Activated CD4-positive, alpha-beta T cell treated with anti-CD3 and anti-CD28 coated beads for 36 hours (primary cell): ENCODE measurements at regions of chr9 and their contacts with region 1.

Region 1: GRCh38 chr9:113591001-113591898 is 127.7 kb downstream of the RGS3 start:
- DNase-seq: peak; percentile 89
- ATAC-seq: peak; percentile 74
- H3K4me3 Mint-ChIP-seq: no peak overlapping the region
- H3K27ac Mint-ChIP-seq: no peak overlapping the region
- H3K4me1 Mint-ChIP-seq: peaks cover 40% of the 10 kb centered on the region
- H3K27me3 Mint-ChIP-seq: no peaks in the 10 kb centered on the region

Region 2: GRCh38 chr9:113446323-113446740 is 144.9 kb before region 1 on chr9:
- CTCF ChIA-PET with region 1: interaction called, 33 read pairs
- POLR2A ChIA-PET with region 1: no interaction called
- intact Hi-C with region 1: loop called (anchors 2 kb)
- DNase-seq: peak; percentile 28
- ATAC-seq: peak; percentile 47
- H3K4me3 Mint-ChIP-seq: no peak overlapping the region
- H3K27ac Mint-ChIP-seq: no peak overlapping the region
- H3K4me1 Mint-ChIP-seq: peaks cover 3% of the 10 kb centered on the region
- H3K27me3 Mint-ChIP-seq: no peaks in the 10 kb centered on the region

Region 3: GRCh38 chr9:113602126-113603044 is 11.1 kb after region 1 on chr9:
- CTCF ChIA-PET with region 1: interaction called, 19 read pairs
- POLR2A ChIA-PET with region 1: no interaction called
- intact Hi-C with region 1: no loop called
- DNase-seq: peak; percentile 92
- ATAC-seq: peak; percentile 100
- H3K4me3 Mint-ChIP-seq: no peak overlapping the region
- H3K27ac Mint-ChIP-seq: peak overlapping the region; percentile 78
- H3K4me1 Mint-ChIP-seq: peaks cover 15% of the 10 kb centered on the region
- H3K27me3 Mint-ChIP-seq: no peaks in the 10 kb centered on the region

Region 4: DNA sequence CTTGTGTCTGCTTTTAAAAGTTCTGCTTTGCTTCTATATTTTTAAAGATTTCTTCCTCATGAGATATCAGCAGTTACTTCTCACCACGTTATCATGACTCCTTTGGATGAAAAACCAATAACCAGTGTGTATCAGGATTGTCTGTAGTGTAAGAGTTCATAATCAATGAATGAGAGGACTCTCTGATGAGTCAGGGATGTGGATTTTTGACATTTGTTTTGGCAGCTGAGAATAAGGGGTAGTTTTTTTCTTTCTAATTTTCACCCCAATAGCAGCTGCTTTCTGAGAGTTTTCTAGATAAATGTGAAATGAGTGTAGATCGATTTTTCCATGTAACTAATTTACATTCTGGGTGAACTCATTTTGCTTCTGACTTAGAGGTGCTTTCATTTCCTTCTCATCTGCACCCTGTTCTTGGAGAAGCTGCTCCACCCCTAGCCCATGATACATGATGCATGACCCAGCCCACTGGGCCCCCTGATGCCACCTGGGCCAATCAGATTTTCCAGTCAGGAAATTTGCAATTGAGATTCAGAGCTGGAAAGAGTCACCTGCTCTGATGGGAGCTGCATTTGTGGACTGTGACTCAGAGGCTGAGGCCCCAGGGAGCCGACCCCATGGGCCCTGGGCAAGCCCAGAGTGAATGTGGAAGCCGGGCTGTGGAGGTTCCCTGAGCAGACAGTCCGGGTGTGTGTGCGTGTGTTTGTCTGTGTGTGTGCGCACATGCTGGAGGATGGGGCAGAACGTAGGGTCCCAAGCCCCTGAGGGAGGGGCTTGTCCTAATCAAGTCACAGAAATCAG is 31.6 kb after region 1 on chr9:
- CTCF ChIA-PET with region 1: interaction called, 19 read pairs
- POLR2A ChIA-PET with region 1: no interaction called
- intact Hi-C with region 1: no loop called
- DNase-seq: peak; percentile 90
- ATAC-seq: peak; percentile 92
- H3K4me3 Mint-ChIP-seq: peak overlapping the region; percentile 58
- H3K27ac Mint-ChIP-seq: peak overlapping the region; percentile 98
- H3K4me1 Mint-ChIP-seq: peaks cover 57% of the 10 kb centered on the region
- H3K27me3 Mint-ChIP-seq: no peaks in the 10 kb centered on the region

Region 5: GRCh38 chr9:113632776-113633590 is 41.7 kb after region 1 on chr9:
- CTCF ChIA-PET with region 1: interaction called, 13 read pairs
- POLR2A ChIA-PET with region 1: no interaction called
- intact Hi-C with region 1: no loop called
- DNase-seq: peak; percentile 73
- ATAC-seq: peak; percentile 84
- H3K4me3 Mint-ChIP-seq: no peak overlapping the region
- H3K27ac Mint-ChIP-seq: peak overlapping the region; percentile 61
- H3K4me1 Mint-ChIP-seq: peaks cover 13% of the 10 kb centered on the region
- H3K27me3 Mint-ChIP-seq: peaks cover 9% of the 10 kb centered on the region

Region 6: DNA sequence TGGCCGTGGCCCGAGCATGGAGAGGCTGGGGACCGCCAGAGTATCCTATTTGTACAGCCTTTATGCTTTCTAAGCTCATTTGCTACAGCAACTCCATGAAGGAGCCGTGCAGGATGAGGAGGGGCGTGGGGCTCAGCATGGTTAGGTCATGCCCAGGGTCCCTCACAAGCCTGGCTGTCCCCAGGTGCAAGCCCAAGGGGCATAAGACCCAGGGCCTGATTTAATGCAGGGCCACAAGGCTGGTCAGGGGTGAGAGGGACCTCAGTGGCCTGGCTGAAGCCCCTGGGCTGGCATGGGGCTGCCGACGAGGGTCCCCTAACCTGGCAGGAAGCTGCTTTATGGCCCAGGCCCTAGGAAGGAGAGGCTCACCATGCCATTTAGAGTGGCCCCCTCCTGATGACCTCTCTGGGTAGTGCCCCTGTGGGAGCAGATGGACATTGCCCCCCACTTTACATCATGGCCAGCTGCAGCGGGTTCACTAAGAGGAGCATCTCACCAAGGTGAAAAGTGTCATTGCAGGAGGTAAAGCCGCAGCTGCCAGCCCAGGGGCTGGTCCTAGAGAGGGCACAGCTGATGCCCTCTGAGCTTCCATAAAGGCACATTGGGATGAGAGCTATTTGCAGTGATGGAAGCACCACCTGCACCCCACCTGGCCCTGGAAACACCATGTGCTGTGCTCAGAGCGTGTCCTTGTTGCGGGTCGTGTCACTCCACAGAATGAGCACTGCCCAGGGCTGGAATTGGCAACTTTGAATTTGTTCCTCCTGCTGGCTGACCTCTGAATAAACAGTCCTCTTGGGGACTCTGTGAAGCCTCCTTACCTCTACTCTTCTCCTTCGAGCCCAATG is 343.8 kb after region 1 on chr9:
- CTCF ChIA-PET with region 1: no interaction called
- POLR2A ChIA-PET with region 1: no interaction called
- intact Hi-C with region 1: no loop called
- DNase-seq: no peak
- ATAC-seq: no peak
- H3K4me3 Mint-ChIP-seq: no peak overlapping the region
- H3K27ac Mint-ChIP-seq: no peak overlapping the region
- H3K4me1 Mint-ChIP-seq: no peaks in the 10 kb centered on the region
- H3K27me3 Mint-ChIP-seq: no peaks in the 10 kb centered on the region

Region 7: GRCh38 chr9:114238891-114239875 is 647.9 kb after region 1 on chr9:
- CTCF ChIA-PET with region 1: no interaction called
- POLR2A ChIA-PET with region 1: no interaction called
- intact Hi-C with region 1: no loop called
- DNase-seq: peak; percentile 12
- ATAC-seq: no peak
- H3K4me3 Mint-ChIP-seq: no peak overlapping the region
- H3K27ac Mint-ChIP-seq: no peak overlapping the region
- H3K4me1 Mint-ChIP-seq: peaks cover 4% of the 10 kb centered on the region
- H3K27me3 Mint-ChIP-seq: no peaks in the 10 kb centered on the region